IMR-90 (cell line): ENCODE measurements at regions of chr2 and their contacts with region 1.

Region 1: DNA sequence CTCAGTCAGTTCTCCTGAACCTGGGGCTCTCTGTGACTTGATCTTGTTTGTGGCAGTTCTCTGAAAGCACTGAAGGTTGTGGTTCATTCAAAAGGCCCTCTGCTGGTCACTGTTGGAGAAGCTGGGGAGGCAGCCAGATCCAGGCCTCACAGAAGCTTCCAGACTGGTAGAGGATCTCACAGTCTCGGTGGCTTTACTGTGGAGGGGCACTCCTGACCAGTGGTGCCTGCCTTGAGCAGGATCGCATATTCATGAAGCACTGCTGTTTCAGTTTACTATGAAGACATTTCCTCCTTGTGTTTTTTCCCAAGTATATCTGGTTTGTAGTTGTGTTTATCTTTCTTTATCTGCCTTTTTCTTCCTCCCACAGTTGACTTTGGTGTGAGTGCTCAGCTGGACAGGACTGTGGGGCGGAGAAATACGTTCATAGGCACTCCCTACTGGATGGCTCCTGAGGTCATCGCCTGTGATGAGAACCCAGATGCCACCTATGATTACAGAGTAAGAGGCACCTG is 133.9 kb downstream of the MAP4K4 start:
- DNase-seq: peak; percentile 78
- ATAC-seq: peak; percentile 47
- H3K4me3 ChIP-seq: no peak overlapping the region
- H3K27ac ChIP-seq: peak overlapping the region; percentile 28
- H3K4me1 ChIP-seq: peaks cover 25% of the 10 kb centered on the region
- H3K27me3 ChIP-seq: no peaks in the 10 kb centered on the region
- CTCF ChIP-seq: peak; percentile 71
- POLR2A ChIP-seq: no peak
- RAD21 ChIP-seq: peak; percentile 80

Region 2: GRCh38 chr2:101341901-101342624 is 489.3 kb before region 1 on chr2:
- CTCF ChIA-PET with region 1: interaction called, 8 read pairs
- POLR2A ChIA-PET with region 1: no interaction called
- dilution Hi-C with region 1: no loop called
- in situ Hi-C with region 1: loop called (anchors 10 kb)
- intact Hi-C with region 1: loop called (anchors 5 kb)
- DNase-seq: peak; percentile 61
- ATAC-seq: peak; percentile 87
- H3K4me3 ChIP-seq: no peak overlapping the region
- H3K27ac ChIP-seq: no peak overlapping the region
- H3K4me1 ChIP-seq: peaks cover 2% of the 10 kb centered on the region; the same call in 1 of the 2 replicates
- H3K27me3 ChIP-seq: no peaks in the 10 kb centered on the region
- CTCF ChIP-seq: peak; percentile 84
- POLR2A ChIP-seq: no peak
- RAD21 ChIP-seq: peak; percentile 82

Region 3: DNA sequence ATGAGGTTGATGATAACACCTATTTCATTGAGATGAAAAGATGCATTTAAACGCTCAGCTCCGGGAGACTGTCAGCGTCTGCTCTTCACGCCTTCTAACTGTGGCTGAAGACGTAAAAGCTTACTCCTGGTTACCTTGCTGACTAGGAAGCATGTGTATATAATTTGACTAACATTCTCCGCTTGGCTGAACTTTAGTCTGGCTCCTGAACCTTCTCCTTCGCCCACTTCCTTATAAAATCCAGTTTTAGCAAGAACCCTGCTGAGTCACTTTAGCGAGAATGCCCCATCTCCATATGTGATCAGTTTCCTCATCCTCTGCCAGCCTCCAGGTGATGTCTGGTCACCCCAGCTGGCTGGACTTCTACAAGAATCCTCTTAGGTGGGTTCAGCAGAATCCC is 431.4 kb before region 1 on chr2:
- CTCF ChIA-PET with region 1: no interaction called
- POLR2A ChIA-PET with region 1: no interaction called
- dilution Hi-C with region 1: no loop called
- in situ Hi-C with region 1: loop called (anchors 10 kb)
- intact Hi-C with region 1: no loop called
- DNase-seq: peak; percentile 28
- ATAC-seq: no peak
- H3K4me3 ChIP-seq: no peak overlapping the region
- H3K27ac ChIP-seq: no peak overlapping the region
- H3K4me1 ChIP-seq: peaks cover 8% of the 10 kb centered on the region
- H3K27me3 ChIP-seq: no peaks in the 10 kb centered on the region
- CTCF ChIP-seq: no peak
- POLR2A ChIP-seq: no peak
- RAD21 ChIP-seq: no peak

Region 4: DNA sequence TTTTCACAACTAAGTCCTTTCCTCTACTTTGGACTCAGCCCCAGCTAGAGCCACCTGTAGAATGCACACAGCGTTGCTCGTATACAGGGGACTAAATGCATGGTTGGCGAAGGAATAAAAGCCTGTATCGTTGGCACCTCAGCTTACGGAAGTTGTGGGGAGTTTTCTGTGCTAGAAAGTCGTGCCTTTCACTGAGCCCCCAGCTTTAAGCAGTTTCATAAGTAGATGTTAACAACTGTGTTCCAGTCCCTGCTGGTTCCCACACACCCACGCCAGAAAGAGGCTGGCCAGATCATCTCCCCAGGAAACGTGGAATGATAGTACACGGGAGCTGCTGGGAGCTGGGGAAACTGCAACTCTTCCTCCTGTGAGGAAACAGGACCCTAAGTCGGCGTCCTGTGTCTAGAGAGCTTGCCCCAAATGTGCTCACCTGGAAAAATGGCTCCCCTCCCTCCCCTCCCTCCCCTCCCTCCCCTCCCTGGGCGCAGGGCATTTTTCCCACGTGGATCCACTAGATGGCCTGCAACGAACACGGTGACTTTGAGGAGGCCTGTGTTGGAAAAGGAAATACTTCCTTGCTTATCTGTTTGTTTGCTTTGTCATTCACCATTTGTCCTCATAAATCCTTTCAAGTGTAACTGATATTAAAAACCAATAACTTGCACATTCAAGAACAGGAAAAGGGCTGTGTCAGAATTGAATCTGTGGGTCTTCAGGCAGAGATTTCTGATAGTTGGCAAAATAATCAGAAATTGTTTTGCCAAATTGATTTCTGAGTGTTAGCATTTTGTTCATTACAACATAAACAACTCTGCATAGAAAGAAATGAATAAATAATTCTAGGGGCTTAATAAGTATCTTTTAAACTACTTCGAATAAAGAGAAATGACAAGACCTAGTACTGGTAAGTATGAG is 312.6 kb before region 1 on chr2:
- CTCF ChIA-PET with region 1: interaction called, 6 read pairs
- POLR2A ChIA-PET with region 1: no interaction called
- dilution Hi-C with region 1: no loop called
- in situ Hi-C with region 1: no loop called
- intact Hi-C with region 1: loop called (anchors 1 kb)
- DNase-seq: peak; percentile 50
- ATAC-seq: peak; percentile 54
- H3K4me3 ChIP-seq: no peak overlapping the region
- H3K27ac ChIP-seq: no peak overlapping the region; the same call in 1 of the 2 replicates
- H3K4me1 ChIP-seq: peaks cover 24% of the 10 kb centered on the region
- H3K27me3 ChIP-seq: no peaks in the 10 kb centered on the region
- CTCF ChIP-seq: peak; percentile 56
- POLR2A ChIP-seq: no peak
- RAD21 ChIP-seq: peak; percentile 59

Region 5: GRCh38 chr2:101770726-101771125 is 60.7 kb before region 1 on chr2:
- CTCF ChIA-PET with region 1: interaction called, 11 read pairs
- POLR2A ChIA-PET with region 1: no interaction called
- dilution Hi-C with region 1: no loop called
- in situ Hi-C with region 1: no loop called
- intact Hi-C with region 1: loop called (anchors 2 kb)
- DNase-seq: peak; percentile 62
- ATAC-seq: 0 out of 2 replicates have a peak, but pooled peaks have one; percentile 13
- H3K4me3 ChIP-seq: no peak overlapping the region
- H3K27ac ChIP-seq: no peak overlapping the region
- H3K4me1 ChIP-seq: peaks cover 25% of the 10 kb centered on the region
- H3K27me3 ChIP-seq: no peaks in the 10 kb centered on the region
- CTCF ChIP-seq: peak; percentile 36
- POLR2A ChIP-seq: no peak
- RAD21 ChIP-seq: peak; percentile 39

Region 6: DNA sequence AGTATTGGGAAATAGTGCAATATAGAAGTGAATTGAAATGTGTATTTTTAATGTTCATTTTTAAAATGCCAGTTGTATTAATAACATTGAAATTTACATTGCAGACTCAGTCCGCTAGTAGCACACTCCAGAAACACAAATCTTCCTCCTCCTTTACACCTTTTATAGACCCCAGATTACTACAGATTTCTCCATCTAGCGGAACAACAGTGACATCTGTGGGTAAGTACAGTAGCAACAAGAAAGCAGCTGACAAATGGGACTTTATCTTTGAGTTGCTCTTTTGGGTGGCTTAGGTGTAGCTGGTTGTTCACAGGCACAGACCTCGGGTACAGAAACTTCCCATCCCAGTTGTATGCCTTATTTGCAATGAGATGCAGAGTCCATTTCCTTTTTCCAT is 42.1 kb after region 1 on chr2:
- CTCF ChIA-PET with region 1: no interaction called
- POLR2A ChIA-PET with region 1: no interaction called
- dilution Hi-C with region 1: no loop called
- in situ Hi-C with region 1: no loop called
- intact Hi-C with region 1: no loop called
- DNase-seq: no peak
- ATAC-seq: peak; percentile 27; the same call in 1 of the 2 replicates
- H3K4me3 ChIP-seq: no peak overlapping the region
- H3K27ac ChIP-seq: no peak overlapping the region
- H3K4me1 ChIP-seq: no peaks in the 10 kb centered on the region
- H3K27me3 ChIP-seq: no peaks in the 10 kb centered on the region
- CTCF ChIP-seq: peak; percentile 34
- POLR2A ChIP-seq: no peak
- RAD21 ChIP-seq: peak; percentile 25; the same call in 1 of the 2 replicates